Ascending aorta (tissue), 2 donors: ENCODE measurements at regions of chr13 and their contacts with region 1.

Region 1: GRCh38 chr13:46893798-46894560 is 2.9 kb downstream of the HTR2A start:
- DNase-seq: peak in 1 of 2 donors; percentile 84
- H3K4me3 ChIP-seq: peak overlapping the region; percentile 58 to 82
- H3K27ac ChIP-seq: peak overlapping the region; percentile 71 to 89
- H3K4me1 ChIP-seq: peaks cover 0 to 3% of the 10 kb centered on the region in 2 donors
- H3K27me3 ChIP-seq: no peaks in the 10 kb centered on the region
- CTCF ChIP-seq: peak; percentile 84 to 100 (median 96)

Region 2: GRCh38 chr13:46759846-46760245 is 134.1 kb before region 1 on chr13:
- intact Hi-C with region 1: loop called (anchors 5 kb)
- DNase-seq: no peak
- H3K4me3 ChIP-seq: no peak overlapping the region
- H3K27ac ChIP-seq: peak overlapping the region; percentile 62 to 83
- H3K4me1 ChIP-seq: peaks cover 7 to 19% of the 10 kb centered on the region in 2 donors
- H3K27me3 ChIP-seq: no peaks in the 10 kb centered on the region
- CTCF ChIP-seq: no peak

Region 3: DNA sequence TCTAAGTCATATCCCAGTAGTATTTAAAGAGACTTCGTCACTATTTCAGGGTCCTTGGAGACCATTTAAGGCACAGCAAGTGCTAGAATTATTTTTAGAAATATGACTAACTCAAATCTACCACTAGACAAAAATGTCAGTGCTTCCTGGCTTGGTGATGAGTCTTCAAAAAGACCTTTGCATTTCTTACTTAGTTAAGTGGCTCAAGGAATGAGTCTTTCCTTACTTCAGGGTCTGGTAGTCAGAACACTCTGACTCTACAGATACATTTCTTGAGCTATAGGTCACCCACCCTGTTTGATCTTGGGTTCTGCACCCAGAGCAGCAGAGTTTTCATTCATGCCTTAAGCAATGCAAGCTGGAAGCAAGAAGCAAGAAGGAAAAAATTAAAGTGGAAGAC is 193.9 kb after region 1 on chr13:
- intact Hi-C with region 1: loop called (anchors 10 kb)
- DNase-seq: no peak
- H3K4me3 ChIP-seq: no peak overlapping the region
- H3K27ac ChIP-seq: peak overlapping the region; percentile 43 to 44
- H3K4me1 ChIP-seq: peaks cover 0 to 6% of the 10 kb centered on the region in 2 donors
- H3K27me3 ChIP-seq: no peaks in the 10 kb centered on the region
- CTCF ChIP-seq: no peak

Region 4: DNA sequence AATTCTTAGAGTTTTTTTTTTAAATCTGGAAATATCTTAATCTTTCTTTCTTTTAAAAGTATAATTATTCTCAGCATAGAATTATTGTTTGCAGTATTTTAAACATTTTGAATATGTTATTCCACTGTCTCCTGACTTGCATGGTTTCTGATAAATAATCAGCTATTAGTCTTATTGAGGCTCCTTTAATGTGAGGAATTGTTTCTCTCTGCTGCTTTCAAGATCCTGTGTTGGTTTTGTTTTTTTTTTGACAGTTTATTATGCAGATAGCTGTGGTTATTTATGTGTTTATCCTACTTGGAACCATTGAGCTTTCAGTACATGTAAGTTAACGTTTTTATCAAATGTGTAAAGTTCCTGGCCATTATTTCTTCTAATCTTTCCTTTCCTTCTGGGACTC is 480.8 kb after region 1 on chr13:
- intact Hi-C with region 1: no loop called
- DNase-seq: no peak
- H3K4me3 ChIP-seq: no peak overlapping the region
- H3K27ac ChIP-seq: no peak overlapping the region
- H3K4me1 ChIP-seq: no peaks in the 10 kb centered on the region
- H3K27me3 ChIP-seq: no peaks in the 10 kb centered on the region
- CTCF ChIP-seq: no peak